ENCODE measurements at regions of chr2 and their contacts with region 1.

Region 1: GRCh38 chr2:70977605-70978205 is 725 bp upstream of the ANKRD53 start:
- DNase-seq: peak in 1 of 2 donors; percentile 92
- H3K4me3 ChIP-seq: peak overlapping the region; percentile 64 to 75
- H3K27ac ChIP-seq: peak overlapping the region; percentile 82 to 94
- H3K4me1 ChIP-seq: peaks cover 0 to 16% of the 10 kb centered on the region in 2 donors
- H3K27me3 ChIP-seq: no peaks in the 10 kb centered on the region
- CTCF ChIP-seq: no peak

Region 2: DNA sequence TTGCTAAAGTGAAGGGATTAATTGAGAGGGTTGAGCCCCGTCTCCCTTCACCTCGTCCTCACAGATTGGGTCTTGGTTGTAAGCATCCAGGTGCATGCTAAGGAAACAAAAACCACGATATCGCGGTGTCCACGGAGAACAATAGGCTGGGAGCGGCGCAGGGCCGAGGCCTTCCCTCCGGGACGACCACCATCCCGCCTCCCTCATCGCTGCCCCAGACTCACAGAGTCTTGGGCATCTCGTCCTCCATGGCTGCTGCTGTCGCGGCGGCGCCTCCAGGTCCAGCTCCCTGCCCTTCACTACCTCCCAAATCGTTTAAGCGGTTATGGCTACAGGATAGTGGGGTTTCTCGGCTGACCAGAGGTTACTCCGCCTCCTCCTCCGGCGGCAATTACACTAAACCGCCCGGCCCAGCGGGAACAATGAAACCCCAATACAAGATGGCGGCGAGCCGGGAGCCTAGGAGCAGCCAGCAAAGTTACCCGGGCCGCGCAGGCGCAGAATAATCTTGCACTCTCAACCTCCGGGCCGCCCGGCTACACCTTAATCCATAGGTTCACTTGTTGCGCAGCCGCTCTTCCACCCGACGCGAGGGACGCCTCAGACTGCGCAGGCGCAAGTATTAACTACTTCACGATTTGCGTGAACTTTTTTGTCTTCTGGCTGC is 729.4 kb before region 1 on chr2 and contains the start of gene TIA1:
- intact Hi-C with region 1: loop called (anchors 5 kb)
- DNase-seq: peak; percentile 93 to 99
- H3K4me3 ChIP-seq: peak within 1 kb of the TSS; percentile 69 to 70
- H3K27ac ChIP-seq: peak within 1 kb of the TSS; percentile 87 to 88
- H3K4me1 ChIP-seq: peaks cover 0 to 9% of the 10 kb centered on the region in 2 donors
- H3K27me3 ChIP-seq: no peaks in the 10 kb centered on the region
- CTCF ChIP-seq: no peak
- total RNA-seq, gene TIA1: 19.3 TPM

Region 3: DNA sequence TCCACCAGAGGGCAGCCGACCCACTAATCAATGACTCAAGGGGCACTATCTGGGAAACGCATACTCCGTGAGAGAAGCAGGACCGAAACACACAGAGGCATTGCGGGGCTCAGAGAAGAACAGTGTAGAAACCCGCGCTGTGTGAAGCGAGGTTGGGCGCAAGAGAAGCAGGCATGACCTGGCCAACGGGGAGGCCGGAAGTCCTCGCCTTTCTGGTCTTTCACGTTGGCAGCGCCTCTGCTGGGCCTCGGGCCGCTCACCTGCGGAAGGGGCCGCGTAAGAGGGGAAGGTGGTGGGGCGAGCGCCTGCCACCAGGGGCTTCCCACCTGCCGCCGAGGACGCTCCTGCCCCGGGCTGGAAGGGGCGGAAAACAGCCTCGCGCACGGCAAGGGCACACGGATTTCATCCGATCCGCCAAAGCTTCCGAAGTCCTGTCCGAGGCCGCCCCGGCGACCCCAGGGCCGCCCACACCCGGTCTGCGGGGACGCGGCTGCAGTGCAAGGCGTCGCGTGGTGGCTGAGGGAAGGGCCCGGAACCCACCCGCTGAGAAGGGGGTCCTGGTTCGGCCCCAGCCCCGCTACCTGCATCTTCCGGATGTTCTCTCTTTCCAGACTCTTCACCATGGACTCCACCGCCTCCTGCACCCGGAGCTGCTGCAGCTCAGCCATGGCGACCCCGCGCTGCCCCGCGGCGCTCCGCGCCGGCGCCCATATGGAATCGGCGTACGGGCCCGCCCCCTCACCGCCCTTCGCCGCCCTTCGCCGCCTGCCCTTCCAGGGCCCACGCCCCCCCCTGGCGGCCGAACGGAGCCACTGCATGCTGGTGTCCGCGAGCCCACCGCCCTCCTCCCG is 676.1 kb before region 1 on chr2 and contains the start of gene FAM136A:
- intact Hi-C with region 1: loop called (anchors 10 kb)
- DNase-seq: peak; percentile 16 to 90
- H3K4me3 ChIP-seq: peak within 1 kb of the TSS; percentile 66 to 84
- H3K27ac ChIP-seq: peak within 1 kb of the TSS; percentile 80
- H3K4me1 ChIP-seq: peaks cover 0 to 5% of the 10 kb centered on the region in 2 donors
- H3K27me3 ChIP-seq: no peaks in the 10 kb centered on the region
- CTCF ChIP-seq: peak; percentile 94 to 99 (median 97)
- total RNA-seq, gene FAM136A: 2.0 TPM

Region 4: DNA sequence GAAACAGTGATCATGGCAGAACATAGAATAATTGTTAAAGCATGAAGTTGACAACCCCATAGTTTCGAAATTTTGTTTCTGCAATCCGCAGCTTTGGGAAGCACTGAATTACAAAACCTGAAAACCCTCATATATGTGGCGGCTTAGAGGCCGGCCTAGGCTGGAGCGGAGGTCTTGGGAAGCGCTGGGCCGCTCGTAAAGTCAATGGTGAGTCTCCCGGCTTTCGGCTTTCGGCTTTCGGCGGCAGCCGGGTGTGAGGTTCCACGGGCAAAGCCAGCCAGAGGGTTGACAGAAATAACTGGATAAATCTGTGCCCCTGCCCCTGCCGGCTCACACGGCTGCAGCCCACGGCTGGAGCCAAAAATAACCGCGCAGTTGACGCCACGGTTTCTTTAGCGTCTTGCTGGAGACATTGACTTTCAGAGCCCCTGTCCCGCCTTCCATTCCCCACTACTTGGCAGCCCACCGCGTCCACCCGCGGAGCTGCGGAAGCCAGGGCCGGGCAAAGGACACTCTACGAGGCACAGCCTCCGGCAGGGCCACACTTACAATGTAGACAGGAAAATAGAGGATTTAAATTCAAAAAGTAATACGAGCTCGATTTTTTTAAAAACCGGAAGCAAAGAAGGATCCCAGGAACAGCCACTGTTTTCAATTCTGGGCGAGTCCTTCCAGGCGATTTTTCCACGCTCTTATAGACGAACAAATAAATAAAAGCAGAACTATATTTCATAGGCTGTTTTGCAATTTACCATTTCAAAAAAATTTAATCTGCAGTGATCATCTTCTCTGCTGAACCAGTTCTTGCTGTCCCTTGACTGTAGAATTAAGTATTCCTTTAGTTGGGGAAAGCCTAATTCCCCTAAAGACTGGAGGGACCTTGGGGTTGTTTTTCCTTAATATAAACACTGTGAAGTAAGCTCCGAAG is 70.3 kb before region 1 on chr2:
- intact Hi-C with region 1: no loop called
- DNase-seq: peak in 1 of 2 donors; percentile 60
- H3K4me3 ChIP-seq: peak overlapping the region; percentile 22 to 39
- H3K27ac ChIP-seq: no peak overlapping the region
- H3K4me1 ChIP-seq: no peaks in the 10 kb centered on the region
- H3K27me3 ChIP-seq: peaks cover 14% of the 10 kb centered on the region
- CTCF ChIP-seq: no peak

Region 5: DNA sequence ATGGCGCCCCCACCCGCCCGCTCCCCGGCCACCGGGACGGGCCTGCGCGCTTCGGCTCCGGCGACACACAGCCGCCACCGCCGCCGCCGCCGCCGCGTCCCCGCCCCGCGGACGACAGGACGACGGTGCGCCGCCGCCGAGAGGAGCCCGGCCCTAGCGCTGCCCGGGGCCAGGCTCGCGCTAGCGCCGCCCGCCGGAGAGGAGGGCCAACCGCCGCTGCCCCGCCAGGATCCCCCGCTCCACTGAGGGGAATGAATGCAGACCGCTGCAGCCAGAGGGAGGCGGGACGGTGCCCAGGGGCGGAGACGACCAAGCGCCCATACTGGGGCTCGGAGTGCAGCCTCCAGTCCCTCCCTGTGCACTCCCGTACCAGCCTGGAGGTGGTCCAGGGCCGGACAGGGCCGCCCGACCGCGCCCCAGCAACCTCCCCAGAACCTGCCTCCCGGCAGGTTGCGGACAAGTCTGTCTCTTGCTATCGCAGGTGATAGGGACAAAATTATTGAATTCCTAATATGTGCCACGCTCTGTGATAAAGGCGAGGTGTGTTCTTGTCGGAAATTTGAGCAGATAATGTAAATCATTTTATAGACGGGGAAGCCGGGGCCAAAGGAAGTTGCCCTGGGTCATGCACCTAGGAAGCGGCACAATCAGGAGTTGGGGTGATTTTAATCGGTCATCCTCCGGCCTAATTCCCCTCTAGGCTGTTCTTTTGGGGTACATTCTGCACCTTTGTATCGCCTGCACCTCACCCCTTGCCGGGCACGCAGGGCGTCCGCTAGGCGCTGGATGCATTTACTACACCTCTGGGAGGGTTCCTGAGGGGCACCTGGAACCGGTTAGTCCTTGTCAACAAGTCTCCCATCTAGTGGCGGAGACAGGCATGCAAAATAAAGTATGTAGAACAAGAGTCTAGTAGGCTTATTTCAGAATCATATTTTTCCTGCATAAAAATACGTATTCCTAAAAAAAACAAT is 17.3 kb after region 1 on chr2 and contains the start of gene TEX261:
- intact Hi-C with region 1: loop called (anchors 1 kb)
- DNase-seq: peak; percentile 46 to 95
- H3K4me3 ChIP-seq: peak within 1 kb of the TSS; percentile 84 to 95
- H3K27ac ChIP-seq: peak within 1 kb of the TSS; percentile 84 to 92
- H3K4me1 ChIP-seq: peaks cover 2 to 17% of the 10 kb centered on the region in 2 donors
- H3K27me3 ChIP-seq: no peaks in the 10 kb centered on the region
- CTCF ChIP-seq: peak; percentile 56 to 73 (median 60)
- total RNA-seq, gene TEX261: 133 TPM

Region 6: DNA sequence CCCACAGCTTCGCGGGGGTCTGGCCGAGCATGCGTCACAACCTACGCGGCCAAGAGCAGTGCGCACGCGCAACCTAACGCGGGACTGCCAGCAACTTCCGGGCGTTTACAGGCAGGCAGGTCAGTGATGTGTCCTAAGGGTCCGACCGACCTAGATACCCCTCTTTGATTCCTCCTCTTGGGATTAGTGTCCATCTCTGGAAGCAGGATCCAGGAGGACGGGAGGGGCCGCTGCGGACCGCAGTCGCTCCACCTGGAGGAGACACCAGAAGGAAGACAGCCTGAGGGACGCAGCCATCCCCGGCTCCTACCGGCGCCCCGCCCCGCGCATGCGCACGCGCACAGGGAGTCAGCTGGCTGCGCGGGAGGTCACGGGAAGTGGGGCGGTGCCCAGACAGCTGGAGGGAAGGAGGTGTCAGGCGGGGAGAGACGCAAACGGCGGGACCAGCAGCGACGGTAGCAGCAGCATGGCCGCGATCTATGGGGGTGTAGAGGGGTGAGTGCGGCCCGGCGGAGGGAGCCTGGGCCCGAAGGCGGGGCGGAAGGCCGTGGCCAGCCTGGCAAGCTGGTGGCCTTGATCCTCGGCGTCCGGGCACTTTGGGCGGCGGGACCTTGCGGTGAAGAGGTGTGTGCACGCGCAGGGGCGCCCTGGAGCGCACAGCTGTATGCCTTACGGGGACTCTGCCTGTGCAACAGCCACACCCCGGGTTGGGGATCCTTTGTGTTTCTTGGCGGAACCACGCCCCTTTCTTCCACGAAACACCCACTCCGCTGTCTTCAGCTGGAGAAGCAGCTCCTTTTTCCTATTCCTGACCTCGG is 90.7 kb after region 1 on chr2 and contains the start of gene NAGK:
- intact Hi-C with region 1: loop called (anchors 1 kb)
- DNase-seq: peak; percentile 86 to 98
- H3K4me3 ChIP-seq: peak within 1 kb of the TSS; percentile 66 to 84
- H3K27ac ChIP-seq: peak within 1 kb of the TSS; percentile 81 to 97
- H3K4me1 ChIP-seq: peaks cover 6 to 22% of the 10 kb centered on the region in 2 donors
- H3K27me3 ChIP-seq: no peaks in the 10 kb centered on the region
- CTCF ChIP-seq: no peak
- total RNA-seq, gene NAGK: 97.4 TPM

Region 7: DNA sequence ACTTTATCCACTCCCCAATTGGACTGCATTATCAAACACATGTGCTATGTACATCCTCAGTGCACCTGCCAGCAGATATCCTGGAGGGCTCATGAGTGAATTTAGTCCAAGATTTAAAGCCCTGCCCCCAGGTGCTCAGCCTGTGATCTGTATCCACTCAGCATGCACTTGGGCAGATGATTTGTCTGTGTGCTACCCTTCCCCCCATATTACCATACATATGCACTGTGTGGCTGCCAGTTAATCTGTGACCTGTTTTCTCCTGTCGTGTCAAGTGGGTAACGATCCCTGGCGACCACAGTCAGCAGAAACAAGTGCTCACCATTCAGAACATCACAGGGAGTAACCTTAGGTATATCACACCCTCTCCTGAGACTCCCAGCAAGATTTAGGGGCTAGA is 100.9 kb after region 1 on chr2:
- intact Hi-C with region 1: no loop called
- DNase-seq: no peak
- H3K4me3 ChIP-seq: no peak overlapping the region
- H3K27ac ChIP-seq: no peak overlapping the region
- H3K4me1 ChIP-seq: no peaks in the 10 kb centered on the region
- H3K27me3 ChIP-seq: no peaks in the 10 kb centered on the region
- CTCF ChIP-seq: no peak

Region 8: GRCh38 chr2:71130113-71130904 is 152.6 kb after region 1 on chr2 and contains the starts of genes MCEE and MPHOSPH10:
- intact Hi-C with region 1: loop called (anchors 5 kb)
- DNase-seq: peak; percentile 47 to 94
- H3K4me3 ChIP-seq: peak within 1 kb of the TSS; percentile 66 to 72
- H3K27ac ChIP-seq: peak within 1 kb of the TSS; percentile 84 to 94
- H3K4me1 ChIP-seq: peaks cover 0 to 17% of the 10 kb centered on the region in 2 donors
- H3K27me3 ChIP-seq: no peaks in the 10 kb centered on the region
- CTCF ChIP-seq: no peak
- total RNA-seq, gene MCEE: 2.0 TPM
- total RNA-seq, gene MPHOSPH10: 23.0 TPM

Region 9: GRCh38 chr2:71226965-71227560 is 249.4 kb after region 1 on chr2 and contains the start of gene PAIP2B:
- intact Hi-C with region 1: loop called (anchors 5 kb)
- DNase-seq: peak; percentile 97 to 99
- H3K4me3 ChIP-seq: peak within 1 kb of the TSS; percentile 67 to 85
- H3K27ac ChIP-seq: peak within 1 kb of the TSS; percentile 46 to 80
- H3K4me1 ChIP-seq: peaks cover 0 to 13% of the 10 kb centered on the region in 2 donors
- H3K27me3 ChIP-seq: no peaks in the 10 kb centered on the region
- CTCF ChIP-seq: no peak
- total RNA-seq, gene PAIP2B: 0.32 TPM

Region 10: DNA sequence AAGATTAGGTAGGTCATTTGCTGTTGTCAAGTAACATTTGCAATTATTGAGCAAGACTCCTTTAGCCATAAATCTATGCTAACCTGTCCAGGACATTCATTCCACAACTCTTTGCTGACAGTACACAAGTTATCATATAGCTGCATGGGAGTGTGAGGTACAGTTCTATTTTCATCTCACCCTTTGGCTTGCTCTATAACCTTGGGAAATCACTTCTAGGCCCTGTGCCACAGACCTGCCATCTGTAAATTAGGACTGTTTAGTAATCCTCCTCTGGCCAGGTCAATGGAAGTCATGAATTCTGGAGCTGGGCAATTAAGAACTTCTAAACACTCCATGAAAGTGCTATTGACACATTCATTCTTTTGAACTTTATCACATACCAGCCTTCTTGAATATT is 283.8 kb after region 1 on chr2:
- intact Hi-C with region 1: no loop called
- DNase-seq: no peak
- H3K4me3 ChIP-seq: no peak overlapping the region
- H3K27ac ChIP-seq: no peak overlapping the region
- H3K4me1 ChIP-seq: no peaks in the 10 kb centered on the region
- H3K27me3 ChIP-seq: no peaks in the 10 kb centered on the region
- CTCF ChIP-seq: no peak